ENCODE measurements at regions of chr4 and their contacts with region 1.

Region 1: GRCh38 chr4:161642708-161643107 is 521.1 kb downstream of the FSTL5 start:
- DNase-seq: no peak
- ATAC-seq: no peak
- H3K4me3 ChIP-seq: no peak overlapping the region
- H3K27ac ChIP-seq: no peak overlapping the region
- H3K4me1 ChIP-seq: no peaks in the 10 kb centered on the region
- H3K27me3 ChIP-seq: no peaks in the 10 kb centered on the region
- CTCF ChIP-seq: no peak; the same call in 1 of the 2 replicates

Region 2: DNA sequence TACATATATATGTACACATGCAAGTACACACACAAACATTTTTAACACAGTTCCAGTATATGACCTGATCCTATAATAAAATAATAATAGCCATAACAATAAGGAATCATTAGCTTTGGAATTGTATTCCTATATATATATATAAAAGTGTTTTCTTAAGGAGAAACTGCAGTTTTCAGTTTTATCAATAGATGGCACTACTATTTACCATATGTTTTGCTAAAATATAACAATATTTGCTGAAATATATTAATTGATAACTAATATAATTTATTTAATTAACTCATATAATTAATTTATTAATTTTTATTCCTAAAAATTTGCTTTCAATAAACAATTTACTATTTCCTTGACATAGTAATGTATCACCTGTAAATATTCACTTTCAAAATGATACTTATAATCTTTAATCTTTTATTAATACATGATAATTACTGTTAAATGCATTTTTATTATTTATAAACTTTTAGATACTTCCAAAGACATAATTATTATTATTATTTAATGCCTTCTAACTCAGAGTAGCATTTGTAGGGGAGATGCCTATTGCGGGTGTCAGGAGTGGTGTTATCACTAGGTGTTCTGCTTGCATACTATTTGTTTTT is 78.4 kb before region 1 on chr4:
- CTCF ChIA-PET with region 1: no interaction called
- POLR2A ChIA-PET with region 1: no interaction called
- in situ Hi-C with region 1: no loop called
- intact Hi-C with region 1: loop called (anchors 5 kb)
- DNase-seq: no peak
- ATAC-seq: no peak
- H3K4me3 ChIP-seq: no peak overlapping the region
- H3K27ac ChIP-seq: no peak overlapping the region
- H3K4me1 ChIP-seq: no peaks in the 10 kb centered on the region
- H3K27me3 ChIP-seq: no peaks in the 10 kb centered on the region
- CTCF ChIP-seq: no peak

Region 3: DNA sequence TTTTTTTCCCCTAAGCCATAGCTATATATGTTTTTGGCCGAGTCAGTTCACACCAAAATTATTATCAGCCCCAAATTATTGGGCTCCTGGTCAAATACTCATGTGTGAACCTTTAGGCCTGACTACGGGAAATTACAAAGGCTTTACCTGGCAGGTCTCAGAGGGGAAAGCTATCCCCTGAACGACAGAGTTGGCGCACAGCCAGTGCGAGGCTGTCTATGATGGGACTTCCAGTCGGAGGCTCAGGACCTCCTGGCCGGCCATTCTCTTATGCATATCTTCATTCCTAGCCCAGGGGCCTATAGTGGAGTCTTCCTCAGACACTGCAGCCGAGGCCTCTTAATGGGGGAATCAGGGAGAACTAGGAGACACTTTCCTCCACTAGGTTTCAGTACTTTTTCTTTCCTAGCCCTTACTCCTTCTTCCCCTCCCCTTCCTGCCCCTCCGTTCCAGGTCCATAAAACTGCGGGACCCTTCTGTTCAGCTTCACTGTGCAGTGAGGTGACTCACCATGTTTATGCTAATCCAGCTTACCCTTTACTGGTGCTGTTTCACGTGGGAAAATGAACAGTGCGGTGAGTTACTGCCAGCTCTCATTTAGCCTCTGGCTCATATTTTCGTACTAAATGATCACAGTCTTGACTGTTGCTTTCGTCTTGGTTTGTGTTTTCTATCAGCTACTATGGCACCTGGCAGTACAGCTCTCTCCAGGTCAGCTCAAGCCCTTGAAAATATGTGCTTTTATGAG is 12.8 kb before region 1 on chr4:
- CTCF ChIA-PET with region 1: no interaction called
- POLR2A ChIA-PET with region 1: interaction called, 10 read pairs
- in situ Hi-C with region 1: no loop called
- intact Hi-C with region 1: no loop called
- DNase-seq: no peak
- ATAC-seq: peak; percentile 75; the same call in 1 of the 2 replicates
- H3K4me3 ChIP-seq: no peak overlapping the region
- H3K27ac ChIP-seq: no peak overlapping the region
- H3K4me1 ChIP-seq: no peaks in the 10 kb centered on the region
- H3K27me3 ChIP-seq: no peaks in the 10 kb centered on the region
- CTCF ChIP-seq: no peak

Region 4: GRCh38 chr4:163284304-163284703 is 1641.6 kb after region 1 on chr4:
- CTCF ChIA-PET with region 1: no interaction called
- POLR2A ChIA-PET with region 1: no interaction called
- in situ Hi-C with region 1: no loop called
- intact Hi-C with region 1: no loop called
- DNase-seq: no peak
- ATAC-seq: no peak
- H3K4me3 ChIP-seq: no peak overlapping the region
- H3K27ac ChIP-seq: no peak overlapping the region
- H3K4me1 ChIP-seq: no peaks in the 10 kb centered on the region
- H3K27me3 ChIP-seq: no peaks in the 10 kb centered on the region
- CTCF ChIP-seq: no peak